PC-3 (cell line): ENCODE measurements at regions of chr1 and their contacts with region 1.

Region 1: GRCh38 chr1:164673584-164674214 is 114.7 kb downstream of the PBX1 start:
- DNase-seq: peak; percentile 33
- ATAC-seq: no peak
- H3K4me3 ChIP-seq: no peak overlapping the region
- H3K27ac ChIP-seq: no peak overlapping the region
- H3K4me1 ChIP-seq: peaks cover 14% of the 10 kb centered on the region
- H3K27me3 ChIP-seq: no peaks in the 10 kb centered on the region
- CTCF ChIP-seq: peak; percentile 82

Region 2: DNA sequence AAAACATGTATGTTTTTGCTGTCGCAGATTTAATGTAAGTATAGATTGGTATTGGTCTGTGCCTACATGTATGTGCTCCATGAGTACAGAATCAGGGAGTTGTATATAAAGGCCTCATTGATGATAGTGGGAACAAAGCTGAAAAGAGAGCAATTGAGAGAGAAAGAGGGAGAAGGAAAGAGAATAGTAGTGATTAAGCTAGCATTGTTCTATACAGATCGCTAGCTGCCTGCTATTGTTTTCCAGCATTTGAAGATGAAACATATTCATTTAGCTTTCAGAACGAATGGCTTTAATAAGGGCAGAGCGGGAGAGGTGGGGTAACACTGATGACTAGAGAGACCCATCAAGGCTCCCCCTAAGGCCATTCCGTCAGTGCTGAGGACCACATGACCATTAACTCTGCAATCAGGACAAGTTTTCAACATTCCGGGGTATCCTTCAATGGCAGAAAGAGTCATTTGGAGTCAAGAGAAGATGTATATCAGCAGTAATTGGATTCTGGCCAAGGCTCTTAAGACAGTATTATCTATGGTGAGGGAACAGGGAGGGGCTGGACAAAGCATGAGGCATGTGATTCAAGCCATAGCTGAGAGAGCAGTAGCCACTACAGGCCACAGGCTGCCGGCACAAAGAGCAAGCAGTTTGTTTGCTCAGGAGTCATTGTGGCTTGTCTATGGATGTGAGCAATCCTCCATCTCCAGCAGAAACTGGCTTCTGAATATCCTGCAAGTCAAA is 61.8 kb after region 1 on chr1:
- CTCF ChIA-PET with region 1: no interaction called
- POLR2A ChIA-PET with region 1: no interaction called
- intact Hi-C with region 1: loop called (anchors 10 kb)
- DNase-seq: peak; percentile 89
- ATAC-seq: peak; percentile 97
- H3K4me3 ChIP-seq: no peak overlapping the region
- H3K27ac ChIP-seq: peak overlapping the region; percentile 36; the same call in 1 of the 2 replicates
- H3K4me1 ChIP-seq: peaks cover 34% of the 10 kb centered on the region
- H3K27me3 ChIP-seq: no peaks in the 10 kb centered on the region
- CTCF ChIP-seq: no peak

Region 3: GRCh38 chr1:164781972-164782371 is 108.3 kb after region 1 on chr1:
- CTCF ChIA-PET with region 1: no interaction called
- POLR2A ChIA-PET with region 1: no interaction called
- intact Hi-C with region 1: no loop called
- DNase-seq: no peak
- ATAC-seq: no peak
- H3K4me3 ChIP-seq: no peak overlapping the region
- H3K27ac ChIP-seq: no peak overlapping the region
- H3K4me1 ChIP-seq: peaks cover 1% of the 10 kb centered on the region; the same call in 1 of the 2 replicates
- H3K27me3 ChIP-seq: no peaks in the 10 kb centered on the region
- CTCF ChIP-seq: no peak